Activated naive CD4-positive, alpha-beta T cell treated with anti-CD3 and anti-CD28 coated beads for 36 hours (primary cell): ENCODE measurements at regions of chr1 and their contacts with region 1.

Region 1: GRCh38 chr1:203006948-203007871 is at the start of gene TMEM183A:
- DNase-seq: peak; percentile 98
- H3K4me3 Mint-ChIP-seq: peak within 1 kb of the TSS; percentile 79
- H3K27ac Mint-ChIP-seq: peak within 1 kb of the TSS; percentile 93
- H3K4me1 Mint-ChIP-seq: peaks cover 27% of the 10 kb centered on the region
- H3K27me3 Mint-ChIP-seq: no peaks in the 10 kb centered on the region
- total RNA-seq, gene TMEM183A: 80.3 to 90.6 TPM

Region 2: DNA sequence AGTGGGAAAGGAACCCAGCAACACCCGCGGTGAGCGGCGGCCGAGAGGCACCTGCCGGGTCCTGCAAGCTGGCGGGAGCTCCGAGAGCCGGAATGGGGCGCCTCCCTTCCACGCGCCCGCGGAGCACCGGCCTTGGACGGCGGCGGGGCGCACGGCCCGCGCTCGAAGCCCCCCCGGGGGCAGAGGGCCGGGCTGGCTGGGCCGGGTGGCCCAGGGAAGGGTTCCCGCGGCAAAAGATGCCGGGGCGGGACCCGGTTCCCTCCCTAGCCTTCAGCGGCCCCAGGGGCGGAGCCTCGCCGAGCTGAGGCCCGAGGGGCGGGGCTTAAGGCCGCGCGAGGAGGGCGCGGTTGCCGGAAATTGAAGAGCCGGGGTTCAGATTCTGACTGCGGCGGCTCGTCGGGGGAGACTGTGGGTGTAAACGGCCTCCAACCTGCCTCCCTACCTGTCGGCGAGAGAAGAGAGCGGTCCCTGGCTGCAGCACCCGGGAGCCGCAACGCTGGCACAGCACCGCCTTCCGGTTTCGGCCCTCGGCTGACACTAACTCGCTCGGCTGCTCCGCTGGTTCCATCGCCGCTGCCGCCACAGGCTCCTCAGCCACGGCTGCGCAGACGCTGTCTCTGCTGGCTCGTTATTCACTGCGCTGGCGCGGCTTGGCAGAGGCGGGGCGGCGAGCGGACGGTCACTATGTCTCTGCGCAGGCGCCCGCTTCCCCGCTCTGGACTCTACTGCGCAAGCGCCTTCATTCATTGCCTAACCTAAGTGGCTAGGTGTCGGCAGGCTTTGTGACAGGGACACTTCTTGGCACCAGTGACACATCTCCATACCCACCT is 118.5 kb before region 1 on chr1 and contains the start of gene RABIF:
- CTCF ChIA-PET with region 1: interaction called, 3 read pairs
- intact Hi-C with region 1: loop called (anchors 2 kb)
- DNase-seq: peak; percentile 97
- H3K4me3 Mint-ChIP-seq: peak within 1 kb of the TSS; percentile 94
- H3K27ac Mint-ChIP-seq: peak within 1 kb of the TSS; percentile 96
- H3K4me1 Mint-ChIP-seq: peaks cover 24% of the 10 kb centered on the region
- H3K27me3 Mint-ChIP-seq: no peaks in the 10 kb centered on the region
- total RNA-seq, gene RABIF: 5.9 to 6.2 TPM

Region 3: DNA sequence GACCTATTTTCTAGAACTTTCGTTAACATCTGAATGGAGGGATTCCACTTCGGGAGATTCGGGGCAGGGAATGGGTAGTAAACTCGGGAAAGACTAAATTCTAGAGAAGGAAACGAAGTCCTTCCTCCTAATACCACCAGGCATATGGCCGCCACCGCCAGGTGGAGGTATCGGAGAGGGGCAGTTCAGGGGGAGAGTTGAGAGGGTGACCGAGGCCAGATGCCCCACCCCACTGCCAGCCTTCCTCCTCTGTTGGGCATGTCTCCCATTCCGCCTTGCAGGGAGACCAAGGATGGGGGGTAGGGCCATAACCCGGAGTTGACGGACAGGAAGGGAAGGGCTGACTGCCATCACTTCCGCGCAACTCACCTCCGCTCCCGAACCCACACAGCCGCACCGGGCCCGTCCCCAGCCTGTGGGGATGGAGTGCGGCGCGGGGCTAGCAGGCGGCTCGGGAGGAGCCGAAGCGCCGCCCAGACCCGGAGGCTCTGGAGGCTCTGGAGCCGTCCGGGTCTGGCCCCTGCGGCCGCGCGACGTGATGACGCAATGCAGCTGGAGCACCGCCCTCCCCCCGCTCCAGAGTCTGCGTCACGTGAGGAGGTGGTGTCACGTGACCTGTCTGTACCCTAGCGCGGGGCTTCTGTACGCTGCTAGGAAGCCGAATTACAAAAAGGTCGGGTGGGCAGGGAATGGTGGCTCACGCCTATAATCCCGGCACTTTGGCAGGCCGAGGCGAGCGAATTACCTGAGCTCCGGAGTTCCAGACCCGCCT is 80.3 kb before region 1 on chr1 and contains the start of gene KLHL12:
- CTCF ChIA-PET with region 1: no interaction called
- intact Hi-C with region 1: loop called (anchors 1 kb)
- DNase-seq: peak; percentile 96
- H3K4me3 Mint-ChIP-seq: peak within 1 kb of the TSS; percentile 95
- H3K27ac Mint-ChIP-seq: peak within 1 kb of the TSS; percentile 89
- H3K4me1 Mint-ChIP-seq: peaks cover 24% of the 10 kb centered on the region
- H3K27me3 Mint-ChIP-seq: no peaks in the 10 kb centered on the region
- total RNA-seq, gene KLHL12: 42.5 to 42.6 TPM

Region 4: GRCh38 chr1:202957733-202958543 is 49.3 kb before region 1 on chr1 and contains the start of gene ADIPOR1:
- CTCF ChIA-PET with region 1: no interaction called
- intact Hi-C with region 1: loop called (anchors 1 kb)
- DNase-seq: peak; percentile 94
- H3K4me3 Mint-ChIP-seq: peak within 1 kb of the TSS; percentile 85
- H3K27ac Mint-ChIP-seq: peak within 1 kb of the TSS; percentile 37
- H3K4me1 Mint-ChIP-seq: peaks cover 48% of the 10 kb centered on the region
- H3K27me3 Mint-ChIP-seq: no peaks in the 10 kb centered on the region
- total RNA-seq, gene ADIPOR1: 75.5 to 77.0 TPM

Region 5: GRCh38 chr1:202968840-202969295 is 38.3 kb before region 1 on chr1:
- CTCF ChIA-PET with region 1: interaction called, 4 read pairs
- intact Hi-C with region 1: loop called (anchors 1 kb)
- DNase-seq: peak; percentile 56
- H3K4me3 Mint-ChIP-seq: no peak overlapping the region
- H3K27ac Mint-ChIP-seq: no peak overlapping the region
- H3K4me1 Mint-ChIP-seq: peaks cover 28% of the 10 kb centered on the region
- H3K27me3 Mint-ChIP-seq: no peaks in the 10 kb centered on the region

Region 6: GRCh38 chr1:203026031-203026989 is 19.1 kb after region 1 on chr1 and contains the start of gene PPFIA4:
- CTCF ChIA-PET with region 1: interaction called, 8 read pairs
- intact Hi-C with region 1: loop called (anchors 1 kb)
- DNase-seq: peak; percentile 88
- H3K4me3 Mint-ChIP-seq: peak within 1 kb of the TSS; percentile 70
- H3K27ac Mint-ChIP-seq: peak within 1 kb of the TSS; percentile 32
- H3K4me1 Mint-ChIP-seq: peaks cover 10% of the 10 kb centered on the region
- H3K27me3 Mint-ChIP-seq: peaks cover 2% of the 10 kb centered on the region
- total RNA-seq, gene PPFIA4: 4.5 to 6.5 TPM